A673 (cell line): ENCODE measurements at regions of chr18 and their contacts with region 1.

Region 1: GRCh38 chr18:69691008-69691760 is 256.5 kb downstream of the CD226 start:
- DNase-seq: no peak
- H3K4me3 ChIP-seq: no peak overlapping the region
- H3K27ac ChIP-seq: no peak overlapping the region
- H3K4me1 ChIP-seq: no peaks in the 10 kb centered on the region
- H3K27me3 ChIP-seq: no peaks in the 10 kb centered on the region
- CTCF ChIP-seq: no peak

Region 2: DNA sequence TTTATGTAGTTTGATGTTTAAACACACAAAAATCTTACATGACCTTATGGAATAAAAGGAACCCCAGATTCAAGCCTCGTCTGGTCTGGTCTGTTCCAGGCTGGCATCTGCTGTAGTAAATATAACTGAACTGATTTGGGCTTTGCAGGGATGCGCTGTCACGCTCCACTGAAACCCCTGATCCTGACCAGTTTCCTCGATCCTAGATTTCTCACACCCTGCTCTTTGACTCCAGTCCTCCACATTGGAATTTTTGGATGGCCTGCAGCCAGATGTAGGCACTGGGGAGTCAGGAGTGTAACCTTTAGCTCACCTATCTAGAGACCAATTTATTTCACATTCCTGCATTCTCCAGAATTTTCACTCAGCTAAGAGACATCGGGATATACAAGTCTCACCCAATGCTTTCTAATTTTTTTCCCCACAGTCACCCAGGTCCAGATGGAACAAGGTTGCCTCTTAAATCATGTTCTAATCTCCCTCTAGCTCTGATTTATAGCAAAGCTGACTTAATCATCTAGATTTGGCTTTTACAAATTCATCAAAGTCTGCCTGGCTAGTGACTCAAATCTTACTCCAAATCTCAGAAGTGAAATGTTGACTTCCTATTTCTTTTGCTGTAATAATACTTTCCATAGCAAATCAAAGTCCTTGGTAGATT is 36.9 kb after region 1 on chr18:
- CTCF ChIA-PET with region 1: no interaction called
- POLR2A ChIA-PET with region 1: no interaction called
- intact Hi-C with region 1: loop called (anchors 5 kb)
- DNase-seq: no peak
- H3K4me3 ChIP-seq: no peak overlapping the region
- H3K27ac ChIP-seq: no peak overlapping the region
- H3K4me1 ChIP-seq: peaks cover 4% of the 10 kb centered on the region
- H3K27me3 ChIP-seq: no peaks in the 10 kb centered on the region
- CTCF ChIP-seq: no peak

Region 3: DNA sequence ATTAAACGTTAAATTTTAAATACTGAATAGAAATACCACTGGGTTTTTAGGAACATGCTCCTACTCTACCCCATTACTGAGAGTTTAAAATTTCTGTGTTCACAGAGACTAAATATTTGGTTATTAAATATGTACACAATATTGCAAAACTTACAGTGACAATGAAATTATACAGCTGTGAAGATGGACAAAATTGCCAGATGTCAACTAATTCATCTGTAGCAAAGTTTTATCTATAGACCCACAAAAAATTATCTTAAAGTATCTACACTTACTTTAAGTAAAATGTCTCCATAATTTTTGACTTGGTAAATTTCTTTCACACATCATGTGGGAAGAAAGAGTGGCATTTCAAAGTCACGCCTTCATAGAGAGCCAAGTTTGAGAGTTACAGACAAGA is 43.4 kb after region 1 on chr18:
- CTCF ChIA-PET with region 1: no interaction called
- POLR2A ChIA-PET with region 1: no interaction called
- intact Hi-C with region 1: loop called (anchors 5 kb)
- DNase-seq: no peak
- H3K4me3 ChIP-seq: no peak overlapping the region
- H3K27ac ChIP-seq: no peak overlapping the region
- H3K4me1 ChIP-seq: no peaks in the 10 kb centered on the region
- H3K27me3 ChIP-seq: no peaks in the 10 kb centered on the region
- CTCF ChIP-seq: no peak

Region 4: GRCh38 chr18:69763002-69763401 is 71.8 kb after region 1 on chr18:
- CTCF ChIA-PET with region 1: no interaction called
- POLR2A ChIA-PET with region 1: no interaction called
- intact Hi-C with region 1: loop called (anchors 10 kb)
- DNase-seq: no peak
- H3K4me3 ChIP-seq: no peak overlapping the region
- H3K27ac ChIP-seq: no peak overlapping the region
- H3K4me1 ChIP-seq: peaks cover 4% of the 10 kb centered on the region
- H3K27me3 ChIP-seq: no peaks in the 10 kb centered on the region
- CTCF ChIP-seq: no peak